CD8-positive, alpha-beta T cell (primary cell): ENCODE measurements at regions of chr21 and their contacts with region 1.

Region 1: GRCh38 chr21:26170471-26171257 is at the start of gene APP:
- DNase-seq: peak; percentile 75 to 93 (median 84)
- ATAC-seq: peak; percentile 89
- H3K4me3 ChIP-seq: peak within 1 kb of the TSS; percentile 54 to 85
- H3K4me3 Mint-ChIP-seq: peak within 1 kb of the TSS; percentile 96
- H3K27ac ChIP-seq: peak within 1 kb of the TSS in 1 of 2 experiments; percentile 36
- H3K27ac Mint-ChIP-seq: peak within 1 kb of the TSS; percentile 71
- H3K4me1 ChIP-seq: peaks cover 12% of the 10 kb centered on the region
- H3K4me1 Mint-ChIP-seq: peaks cover 14% of the 10 kb centered on the region
- H3K27me3 ChIP-seq: no peaks in the 10 kb centered on the region
- H3K27me3 Mint-ChIP-seq: peaks cover 11% of the 10 kb centered on the region
- CTCF ChIP-seq: peak; percentile 89
- total RNA-seq, gene APP: 14.3 to 18.7 TPM

Region 2: GRCh38 chr21:25881525-25882376 is 288.9 kb before region 1 on chr21:
- CTCF ChIA-PET with region 1: interaction called, 14 read pairs
- POLR2A ChIA-PET with region 1: no interaction called
- intact Hi-C with region 1: loop called (anchors 1 to 2 kb)
- DNase-seq: peak; percentile 27 to 71 (median 53)
- ATAC-seq: peak; percentile 69
- H3K4me3 ChIP-seq: no peak overlapping the region
- H3K4me3 Mint-ChIP-seq: no peak overlapping the region
- H3K27ac ChIP-seq: no peak overlapping the region
- H3K27ac Mint-ChIP-seq: no peak overlapping the region
- H3K4me1 ChIP-seq: no peaks in the 10 kb centered on the region
- H3K4me1 Mint-ChIP-seq: no peaks in the 10 kb centered on the region
- H3K27me3 ChIP-seq: no peaks in the 10 kb centered on the region
- H3K27me3 Mint-ChIP-seq: no peaks in the 10 kb centered on the region
- CTCF ChIP-seq: peak; percentile 82

Region 3: DNA sequence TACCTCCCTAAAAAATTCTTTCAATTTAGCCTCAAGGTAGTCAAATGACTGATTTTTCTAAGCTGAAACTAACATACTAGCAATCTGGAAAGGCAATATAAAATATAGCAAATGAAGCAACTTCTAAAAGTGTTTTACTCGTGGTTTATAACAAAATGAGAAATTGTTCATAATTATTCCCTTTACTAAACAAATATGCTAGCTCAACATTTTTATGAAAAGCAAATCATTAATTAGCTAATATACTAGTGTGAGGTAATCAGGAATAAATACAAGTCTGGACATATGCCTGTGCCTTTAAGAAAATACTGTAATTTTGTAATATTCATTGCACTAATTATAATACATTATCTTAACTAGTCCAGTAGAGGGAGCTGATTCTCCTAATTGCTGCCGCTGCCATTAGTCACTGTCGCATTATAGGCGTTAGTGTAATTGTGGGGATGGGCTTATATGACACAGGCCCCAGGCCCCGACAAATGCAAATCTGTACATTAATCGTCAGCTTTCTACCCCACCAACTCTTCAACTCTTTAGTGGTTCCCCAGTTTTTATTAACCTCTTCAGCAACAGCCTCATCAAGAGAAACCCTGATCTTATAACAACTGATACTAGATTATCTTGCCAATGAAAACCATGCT is 275.0 kb before region 1 on chr21:
- CTCF ChIA-PET with region 1: interaction called, 41 read pairs
- POLR2A ChIA-PET with region 1: interaction called, 8 read pairs
- intact Hi-C with region 1: loop called (anchors 1 to 2 kb)
- DNase-seq: peak in 2 of 9 experiments; percentile 15 to 37
- ATAC-seq: peak; percentile 57
- H3K4me3 ChIP-seq: no peak overlapping the region
- H3K4me3 Mint-ChIP-seq: no peak overlapping the region
- H3K27ac ChIP-seq: no peak overlapping the region
- H3K27ac Mint-ChIP-seq: no peak overlapping the region
- H3K4me1 ChIP-seq: peaks cover 5% of the 10 kb centered on the region
- H3K4me1 Mint-ChIP-seq: peaks cover 10% of the 10 kb centered on the region
- H3K27me3 ChIP-seq: no peaks in the 10 kb centered on the region
- H3K27me3 Mint-ChIP-seq: no peaks in the 10 kb centered on the region
- CTCF ChIP-seq: peak; percentile 49

Region 4: DNA sequence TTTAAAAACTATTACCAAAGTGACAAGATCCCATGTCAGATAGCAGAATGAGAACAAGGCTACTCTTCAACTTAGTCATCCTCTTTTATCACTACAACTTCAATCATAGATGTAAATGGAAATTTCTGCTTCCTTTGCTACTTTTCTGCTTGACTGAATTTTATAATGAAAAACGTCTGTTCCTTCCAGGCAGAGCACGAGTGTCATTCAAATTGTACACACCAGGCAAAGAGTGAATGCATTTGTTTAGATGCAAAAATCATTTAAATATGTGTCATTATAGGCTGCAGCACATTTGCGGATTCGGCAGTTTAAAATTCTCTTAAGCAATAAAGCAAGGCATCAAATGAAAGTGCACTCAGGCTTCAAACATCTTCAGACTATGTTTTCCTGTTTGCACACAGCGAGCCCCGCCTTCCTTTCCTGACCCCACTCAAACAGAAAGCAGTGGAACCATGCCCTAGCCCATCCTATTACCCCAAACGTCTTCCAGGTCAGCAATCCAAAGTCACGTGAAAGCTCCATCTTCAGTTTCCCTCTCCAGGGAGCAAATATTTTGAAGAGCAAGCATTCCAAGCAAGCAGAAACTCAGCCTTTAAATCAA is 99.7 kb before region 1 on chr21:
- CTCF ChIA-PET with region 1: interaction called, 3 read pairs
- POLR2A ChIA-PET with region 1: interaction called, 3 read pairs
- intact Hi-C with region 1: loop called in 1 of 2 experiments (anchors 2 kb)
- DNase-seq: peak in 8 of 9 experiments; percentile 5 to 62 (median 24)
- ATAC-seq: peak; percentile 88
- H3K4me3 ChIP-seq: peak overlapping the region; percentile 7 to 34
- H3K4me3 Mint-ChIP-seq: peak overlapping the region; percentile 87
- H3K27ac ChIP-seq: peak overlapping the region in 1 of 2 experiments; percentile 31
- H3K27ac Mint-ChIP-seq: peak overlapping the region; percentile 95
- H3K4me1 ChIP-seq: peaks cover 9% of the 10 kb centered on the region
- H3K4me1 Mint-ChIP-seq: peaks cover 42% of the 10 kb centered on the region
- H3K27me3 ChIP-seq: no peaks in the 10 kb centered on the region
- H3K27me3 Mint-ChIP-seq: no peaks in the 10 kb centered on the region
- CTCF ChIP-seq: no peak